ENCODE measurements at regions of chr7 and their contacts with region 1.

Region 1: GRCh38 chr7:35624299-35625186 is 70.4 kb downstream of the HERPUD2 start:
- DNase-seq: peak; percentile 70
- CTCF ChIP-seq: peak; percentile 80

Region 2: DNA sequence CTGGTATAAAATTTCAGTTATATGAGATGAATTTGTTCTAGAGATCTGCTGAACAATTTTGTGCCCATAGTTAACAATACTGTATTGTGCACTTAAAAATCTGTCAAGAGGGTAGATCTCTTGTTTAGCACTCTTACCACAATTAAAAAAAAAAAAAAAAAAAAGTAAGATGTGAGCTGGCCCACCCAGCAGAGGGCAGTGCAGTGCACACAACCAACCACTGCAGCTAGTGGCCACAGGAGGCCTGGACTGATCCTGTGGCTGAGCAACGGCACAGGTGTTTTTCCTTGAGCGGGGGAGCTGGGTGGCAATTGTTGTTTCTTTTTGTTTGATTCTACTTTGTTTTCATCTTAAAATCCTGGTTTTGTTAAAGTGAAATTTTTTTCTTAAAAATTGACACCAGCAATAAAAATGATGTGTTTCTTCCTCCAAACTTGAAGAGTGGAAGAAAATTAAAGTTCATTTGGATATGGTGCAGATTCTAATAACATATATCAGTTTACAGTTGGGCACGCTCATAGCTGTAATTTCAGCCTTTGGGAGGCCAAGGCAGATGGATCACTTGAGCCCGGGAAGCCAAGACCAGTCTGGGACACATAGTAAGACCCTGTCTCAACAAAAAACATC is 199.6 kb before region 1 on chr7:
- CTCF ChIA-PET with region 1: interaction called, 37 read pairs
- POLR2A ChIA-PET with region 1: no interaction called
- DNase-seq: peak; percentile 68
- CTCF ChIP-seq: peak; percentile 65

Region 3: DNA sequence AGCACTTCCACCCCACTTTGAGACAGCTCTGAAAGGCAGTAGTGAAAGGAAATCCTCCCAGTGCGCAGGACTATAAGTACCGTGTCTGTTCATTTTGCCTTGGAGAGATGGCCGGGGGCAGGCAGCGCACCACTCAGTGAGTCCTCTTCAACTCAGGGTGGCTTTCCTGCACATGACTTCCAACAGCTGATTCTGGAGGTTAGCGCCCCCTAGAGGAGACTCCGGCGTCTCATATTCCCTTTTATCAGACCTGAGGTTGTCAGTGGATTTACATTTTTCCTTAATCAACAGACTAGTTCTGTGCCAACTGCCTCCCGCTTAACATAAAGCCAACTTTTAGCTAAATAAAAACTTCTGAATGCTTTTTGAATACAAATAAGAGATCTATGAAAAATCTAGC is 30.6 kb before region 1 on chr7:
- CTCF ChIA-PET with region 1: interaction called, 23 read pairs
- POLR2A ChIA-PET with region 1: no interaction called
- DNase-seq: peak; percentile 30
- CTCF ChIP-seq: peak; percentile 12

Region 4: DNA sequence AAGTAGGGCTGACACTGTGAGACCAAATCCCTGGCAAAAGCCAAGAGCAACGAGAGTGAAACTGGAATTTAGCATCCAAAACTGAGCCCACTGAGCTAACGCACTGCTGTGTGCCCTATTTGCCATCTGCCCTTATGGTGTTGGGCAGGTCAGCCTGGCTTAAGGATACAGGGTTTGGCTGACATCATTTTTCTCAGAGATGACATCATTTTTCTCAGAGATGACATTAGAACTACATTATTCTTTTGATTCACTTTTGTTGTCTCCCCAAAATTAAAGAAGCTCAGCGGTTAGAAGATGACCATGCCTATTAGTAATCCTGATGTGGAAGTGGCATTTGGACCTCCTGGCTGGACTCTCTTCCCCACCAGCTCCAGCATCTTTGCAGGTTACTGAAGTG is 17.2 kb before region 1 on chr7:
- CTCF ChIA-PET with region 1: interaction called, 60 read pairs
- POLR2A ChIA-PET with region 1: no interaction called
- DNase-seq: no peak
- CTCF ChIP-seq: no peak

Region 5: DNA sequence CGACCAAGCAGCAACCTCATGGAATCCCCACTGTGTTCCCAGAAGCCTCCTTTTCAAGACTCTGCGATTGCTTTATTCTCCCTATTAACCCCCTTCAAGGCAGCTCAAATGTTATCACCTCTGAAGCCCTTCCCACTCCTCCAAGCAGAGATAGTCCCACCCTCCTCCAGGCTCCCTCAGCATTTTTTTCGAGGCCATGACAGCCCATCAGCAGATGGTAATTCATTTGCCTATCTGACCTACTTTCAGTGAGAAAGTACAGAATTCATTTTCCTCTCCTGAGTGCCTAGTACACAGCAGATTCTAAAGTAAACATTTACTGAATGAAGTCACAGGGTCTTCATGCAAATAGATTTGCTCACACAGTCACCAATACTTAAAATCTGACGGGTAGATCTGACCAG is 22.6 kb after region 1 on chr7:
- CTCF ChIA-PET with region 1: interaction called, 17 read pairs
- POLR2A ChIA-PET with region 1: no interaction called
- DNase-seq: no peak
- CTCF ChIP-seq: no peak

Region 6: GRCh38 chr7:35906191-35906908 is 281.8 kb after region 1 on chr7:
- CTCF ChIA-PET with region 1: interaction called, 14 read pairs
- POLR2A ChIA-PET with region 1: interaction called, 3 read pairs
- DNase-seq: peak; percentile 52
- CTCF ChIP-seq: peak; percentile 69

Region 7: GRCh38 chr7:36048902-36049240 is 424.3 kb after region 1 on chr7:
- CTCF ChIA-PET with region 1: no interaction called
- POLR2A ChIA-PET with region 1: no interaction called
- DNase-seq: no peak
- CTCF ChIP-seq: no peak

Region 8: DNA sequence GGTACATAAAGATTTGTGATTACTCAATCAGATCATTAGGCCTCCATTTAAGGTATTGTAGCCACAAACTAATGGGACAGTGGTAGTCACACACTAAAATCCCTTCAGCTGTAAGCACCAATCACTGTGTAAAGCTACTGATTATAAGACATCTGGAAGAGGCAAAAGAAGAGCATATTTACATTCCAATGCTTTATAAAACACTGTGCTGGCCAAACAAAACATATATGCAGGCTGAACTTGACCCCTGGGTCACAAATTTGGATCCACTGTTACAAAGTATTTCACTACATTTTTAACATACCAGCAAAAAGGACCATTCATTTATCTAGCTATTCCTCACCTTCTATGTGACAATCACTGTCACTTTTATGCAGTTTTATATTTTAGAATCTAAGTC is 723.7 kb after region 1 on chr7:
- CTCF ChIA-PET with region 1: no interaction called
- POLR2A ChIA-PET with region 1: no interaction called
- DNase-seq: no peak
- CTCF ChIP-seq: no peak